PC-3 (cell line): ENCODE measurements at regions of chr17 and their contacts with region 1.

Region 1: GRCh38 chr17:31596382-31597323 is 205.2 kb downstream of the RAB11FIP4 start:
- DNase-seq: peak; percentile 87
- ATAC-seq: peak; percentile 98
- H3K4me3 ChIP-seq: no peak overlapping the region
- H3K27ac ChIP-seq: peak overlapping the region; percentile 96
- H3K4me1 ChIP-seq: peaks cover 32% of the 10 kb centered on the region
- H3K27me3 ChIP-seq: no peaks in the 10 kb centered on the region
- CTCF ChIP-seq: no peak

Region 2: DNA sequence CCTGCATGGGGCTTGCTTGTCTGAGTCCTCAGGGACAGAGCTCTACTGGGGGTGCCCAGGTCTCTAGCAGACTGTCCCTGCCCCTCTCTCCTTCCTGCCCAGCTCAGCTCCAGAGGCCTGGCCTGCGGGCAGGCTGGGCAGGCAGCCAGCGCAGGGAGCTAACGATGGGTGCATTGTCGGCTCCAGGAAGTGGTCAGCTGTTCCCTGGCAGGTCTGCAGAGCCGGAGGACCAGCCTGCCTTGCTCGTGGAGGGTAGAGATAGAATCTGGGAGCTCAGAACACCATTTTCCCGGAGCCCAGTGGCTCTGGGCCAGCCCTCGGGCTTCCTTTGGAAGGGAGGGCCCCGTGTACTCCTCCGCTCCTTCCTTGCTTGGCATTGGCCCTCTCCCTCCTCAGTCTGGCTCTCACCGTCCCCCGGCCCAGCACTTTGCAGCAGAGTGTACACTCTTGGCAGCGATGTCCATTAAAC is 15.6 kb before region 1 on chr17:
- CTCF ChIA-PET with region 1: no interaction called
- POLR2A ChIA-PET with region 1: no interaction called
- intact Hi-C with region 1: loop called (anchors 2 kb)
- DNase-seq: peak; percentile 85
- ATAC-seq: peak; percentile 85
- H3K4me3 ChIP-seq: peak overlapping the region; percentile 50; the same call in 1 of the 2 replicates
- H3K27ac ChIP-seq: peak overlapping the region; percentile 95
- H3K4me1 ChIP-seq: peaks cover 42% of the 10 kb centered on the region
- H3K27me3 ChIP-seq: no peaks in the 10 kb centered on the region
- CTCF ChIP-seq: no peak

Region 3: GRCh38 chr17:31877911-31878702 is 281.5 kb after region 1 on chr17:
- CTCF ChIA-PET with region 1: no interaction called
- POLR2A ChIA-PET with region 1: no interaction called
- intact Hi-C with region 1: no loop called
- DNase-seq: no peak
- ATAC-seq: no peak
- H3K4me3 ChIP-seq: no peak overlapping the region
- H3K27ac ChIP-seq: no peak overlapping the region
- H3K4me1 ChIP-seq: no peaks in the 10 kb centered on the region
- H3K27me3 ChIP-seq: no peaks in the 10 kb centered on the region
- CTCF ChIP-seq: no peak